ENCODE measurements at regions of chr14 and their contacts with region 1.

Region 1: DNA sequence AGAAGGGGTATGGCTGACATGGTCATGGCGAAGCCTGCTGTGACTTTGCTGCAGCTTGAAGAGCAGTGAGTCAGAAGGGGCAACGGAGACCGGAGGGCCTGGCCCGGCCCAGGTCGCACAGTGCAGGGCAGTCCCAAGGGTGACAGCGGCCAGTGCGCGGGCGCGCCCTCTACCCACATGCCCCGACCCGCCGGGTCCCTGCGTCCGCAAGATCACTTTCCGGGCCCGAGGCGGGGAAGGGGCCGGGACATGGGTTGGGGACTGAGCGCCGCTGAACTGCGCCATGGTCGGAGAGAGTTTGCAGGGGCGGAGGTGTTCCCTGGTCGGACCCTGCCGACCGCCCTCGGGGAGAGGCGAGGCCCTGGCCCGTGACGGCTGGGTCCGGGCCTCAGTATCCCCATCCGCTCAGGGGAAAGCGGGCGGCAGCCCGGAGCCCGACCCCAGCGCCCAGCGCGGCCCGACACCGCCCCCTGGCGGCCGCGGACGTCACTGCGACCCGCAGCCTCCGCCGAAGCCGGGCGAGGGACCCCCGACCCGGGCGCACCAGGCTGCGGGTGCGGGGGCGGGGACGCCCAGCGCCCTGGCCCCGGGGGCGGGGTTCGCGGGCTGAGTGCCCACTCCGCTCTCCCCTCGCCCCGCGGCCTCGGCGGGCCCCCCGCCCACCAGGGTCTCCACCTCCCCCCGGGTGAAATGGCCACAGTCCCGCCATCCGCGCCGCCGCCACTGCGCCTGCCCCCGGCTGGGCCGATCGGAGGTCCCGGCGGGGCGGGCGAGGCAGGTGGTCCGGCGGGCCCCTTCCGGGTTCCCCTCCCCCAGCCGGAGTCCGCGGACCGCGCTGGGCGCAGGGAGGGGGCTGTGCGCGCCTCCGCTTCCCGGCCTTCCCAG is 7.2 kb upstream of the ANKRD9 start:
- DNase-seq: peak; percentile 51
- H3K27ac ChIP-seq: peak overlapping the region; percentile 100
- CTCF ChIP-seq: peak; percentile 95

Region 2: GRCh38 chr14:102437997-102438915 is 78.5 kb before region 1 on chr14:
- CTCF ChIA-PET with region 1: interaction called, 18 read pairs
- POLR2A ChIA-PET with region 1: interaction called, 3 read pairs
- DNase-seq: peak; percentile 88
- H3K27ac ChIP-seq: peak overlapping the region; percentile 47
- CTCF ChIP-seq: peak; percentile 83

Region 3: GRCh38 chr14:102464831-102465580 is 51.8 kb before region 1 on chr14:
- CTCF ChIA-PET with region 1: no interaction called
- POLR2A ChIA-PET with region 1: interaction called, 10 read pairs
- DNase-seq: no peak
- H3K27ac ChIP-seq: peak overlapping the region; percentile 23; the same call in 1 of the 2 replicates
- CTCF ChIP-seq: no peak

Region 4: GRCh38 chr14:102795060-102795925 is 278.5 kb after region 1 on chr14:
- CTCF ChIA-PET with region 1: no interaction called
- POLR2A ChIA-PET with region 1: no interaction called
- DNase-seq: peak; percentile 89
- H3K27ac ChIP-seq: peak overlapping the region; percentile 33
- CTCF ChIP-seq: no peak

Measured in RWPE1 (cell line).